ENCODE measurements at regions of chr10 and their contacts with region 1.

Region 1: GRCh38 chr10:73892310-73893030 is 18.1 kb upstream of the CAMK2G start:
- DNase-seq: no peak
- H3K4me3 ChIP-seq: no peak overlapping the region
- H3K4me3 Mint-ChIP-seq: no peak overlapping the region
- H3K27ac ChIP-seq: no peak overlapping the region
- H3K27ac Mint-ChIP-seq: no peak overlapping the region
- H3K4me1 ChIP-seq: no peaks in the 10 kb centered on the region
- H3K4me1 Mint-ChIP-seq: no peaks in the 10 kb centered on the region
- H3K27me3 ChIP-seq: no peaks in the 10 kb centered on the region
- H3K27me3 Mint-ChIP-seq: no peaks in the 10 kb centered on the region

Region 2: DNA sequence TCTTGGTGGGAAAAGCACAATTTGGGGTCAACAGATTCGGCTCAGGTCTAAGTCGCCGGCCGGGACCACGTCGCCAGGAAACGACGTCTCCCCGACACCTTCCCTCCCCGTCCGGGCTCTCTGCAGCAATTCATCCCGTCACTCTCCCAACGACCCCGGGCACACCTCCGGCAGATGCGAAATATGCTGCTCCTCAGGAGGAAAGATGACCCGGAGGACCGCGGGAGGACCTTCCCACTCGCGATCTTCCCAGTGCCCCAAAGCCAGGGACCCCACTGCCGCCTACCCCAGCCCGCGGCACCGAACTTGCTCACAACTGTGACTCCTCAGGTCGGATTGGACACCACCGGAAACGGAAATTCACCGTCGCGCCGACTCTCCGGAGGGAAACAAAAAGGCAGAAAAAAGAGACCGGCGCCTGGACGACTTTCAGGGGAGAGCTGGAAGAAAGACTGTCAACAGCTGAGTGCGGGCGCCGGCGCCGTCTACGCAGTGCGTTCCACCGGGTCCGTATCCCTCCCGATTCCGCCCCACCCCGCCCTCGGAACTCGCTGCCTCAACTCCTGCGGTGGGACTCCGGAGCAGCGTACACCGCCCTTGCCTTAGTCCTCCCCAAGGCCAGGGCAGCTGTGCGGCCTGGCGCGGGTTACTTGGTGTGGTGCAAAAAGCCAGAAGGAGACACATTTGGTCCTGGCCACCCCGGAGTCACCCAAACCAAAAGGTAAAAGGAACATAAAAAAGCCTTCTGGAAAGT is 162.1 kb before region 1 on chr10:
- CTCF ChIA-PET with region 1: no interaction called
- POLR2A ChIA-PET with region 1: no interaction called
- intact Hi-C with region 1: no loop called
- DNase-seq: peak; percentile 87 to 92 (median 90)
- H3K4me3 ChIP-seq: peak overlapping the region; percentile 78 to 81
- H3K4me3 Mint-ChIP-seq: peak overlapping the region; percentile 98 to 100 (median 100)
- H3K27ac ChIP-seq: peak overlapping the region; percentile 78
- H3K27ac Mint-ChIP-seq: peak overlapping the region; percentile 97 to 100 (median 98)
- H3K4me1 ChIP-seq: peaks cover 15% of the 10 kb centered on the region
- H3K4me1 Mint-ChIP-seq: peaks cover 12 to 39% (median 21%) of the 10 kb centered on the region in 4 donors
- H3K27me3 ChIP-seq: no peaks in the 10 kb centered on the region
- H3K27me3 Mint-ChIP-seq: no peaks in the 10 kb centered on the region

Region 3: GRCh38 chr10:74035303-74035702 is 142.8 kb after region 1 on chr10:
- CTCF ChIA-PET with region 1: interaction called, 40 read pairs
- POLR2A ChIA-PET with region 1: no interaction called
- intact Hi-C with region 1: no loop called
- DNase-seq: peak in 1 of 5 donors; percentile 14
- H3K4me3 ChIP-seq: no peak overlapping the region
- H3K4me3 Mint-ChIP-seq: no peak overlapping the region
- H3K27ac ChIP-seq: no peak overlapping the region
- H3K27ac Mint-ChIP-seq: peak overlapping the region in 6 of 7 donors; percentile 31 to 90 (median 80)
- H3K4me1 ChIP-seq: peaks cover 41% of the 10 kb centered on the region
- H3K4me1 Mint-ChIP-seq: peaks cover 43 to 64% (median 48%) of the 10 kb centered on the region in 4 donors
- H3K27me3 ChIP-seq: no peaks in the 10 kb centered on the region
- H3K27me3 Mint-ChIP-seq: no peaks in the 10 kb centered on the region